PC-9 (cell line): ENCODE measurements at regions of chr7 and their contacts with region 1.

Region 1: GRCh38 chr7:16967300-16967811 is 85.6 kb upstream of the AGR3 start:
- DNase-seq: no peak
- H3K4me3 ChIP-seq: no peak overlapping the region
- H3K27ac ChIP-seq: no peak overlapping the region
- H3K4me1 ChIP-seq: no peaks in the 10 kb centered on the region
- H3K27me3 ChIP-seq: no peaks in the 10 kb centered on the region
- CTCF ChIP-seq: no peak

Region 2: DNA sequence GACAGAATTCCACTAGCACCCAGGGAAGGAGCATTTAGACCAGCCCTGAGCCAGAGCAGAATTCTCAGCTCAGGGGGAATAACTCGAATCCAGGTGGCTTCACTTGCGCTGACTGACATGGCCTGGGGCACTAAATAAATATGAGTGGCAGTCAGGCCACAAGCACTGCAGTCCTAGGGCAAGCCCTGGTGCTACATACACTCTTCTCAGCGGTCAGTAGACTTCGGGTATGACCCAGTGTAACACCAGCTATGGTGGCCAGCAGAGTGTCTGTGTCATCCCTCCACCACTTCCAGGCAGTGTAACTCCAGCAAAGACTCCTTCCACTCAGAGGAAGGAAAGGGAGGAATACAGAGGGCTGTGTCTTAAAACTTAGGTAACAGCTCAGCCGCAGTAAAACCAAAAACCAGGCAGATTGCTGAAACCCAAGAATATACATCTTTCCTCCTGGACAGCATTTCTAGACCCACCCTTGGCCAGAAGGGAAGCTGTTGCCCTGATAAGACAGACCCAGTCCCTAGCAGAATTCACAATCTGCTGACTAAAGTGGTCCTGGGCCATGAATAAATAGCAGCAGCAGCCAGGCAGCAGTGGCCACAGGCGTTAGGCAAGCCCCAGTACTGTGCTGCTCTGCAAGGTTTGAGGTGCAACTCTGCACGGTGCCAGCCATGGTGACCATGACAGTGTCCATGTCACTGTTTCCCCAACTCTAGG is 895.9 kb after region 1 on chr7:
- CTCF ChIA-PET with region 1: no interaction called
- POLR2A ChIA-PET with region 1: no interaction called
- intact Hi-C with region 1: loop called (anchors 5 kb)
- DNase-seq: no peak
- H3K4me3 ChIP-seq: no peak overlapping the region
- H3K27ac ChIP-seq: no peak overlapping the region
- H3K4me1 ChIP-seq: no peaks in the 10 kb centered on the region
- H3K27me3 ChIP-seq: no peaks in the 10 kb centered on the region
- CTCF ChIP-seq: no peak